Heart left ventricle (tissue), 16 donors: ENCODE measurements at regions of chr1 and their contacts with region 1.

Region 1: GRCh38 chr1:235971571-235972310 is 93.1 kb downstream of the NID1 start:
- DNase-seq: peak; percentile 90 to 94 (median 92)
- ATAC-seq: peak; percentile 89 to 96 (median 95)
- H3K4me3 ChIP-seq: peak overlapping the region in 10 of 12 donors; percentile 25 to 58 (median 48)
- H3K27ac ChIP-seq: peak overlapping the region; percentile 77 to 95 (median 90)
- H3K4me1 ChIP-seq: peaks cover 0 to 23% (median 15%) of the 10 kb centered on the region in 12 donors
- H3K27me3 ChIP-seq: no peaks in the 10 kb centered on the region
- CTCF ChIP-seq: peak; percentile 78 to 94 (median 88)
- POLR2A ChIP-seq: peak in 1 of 2 donors; percentile 38

Region 2: DNA sequence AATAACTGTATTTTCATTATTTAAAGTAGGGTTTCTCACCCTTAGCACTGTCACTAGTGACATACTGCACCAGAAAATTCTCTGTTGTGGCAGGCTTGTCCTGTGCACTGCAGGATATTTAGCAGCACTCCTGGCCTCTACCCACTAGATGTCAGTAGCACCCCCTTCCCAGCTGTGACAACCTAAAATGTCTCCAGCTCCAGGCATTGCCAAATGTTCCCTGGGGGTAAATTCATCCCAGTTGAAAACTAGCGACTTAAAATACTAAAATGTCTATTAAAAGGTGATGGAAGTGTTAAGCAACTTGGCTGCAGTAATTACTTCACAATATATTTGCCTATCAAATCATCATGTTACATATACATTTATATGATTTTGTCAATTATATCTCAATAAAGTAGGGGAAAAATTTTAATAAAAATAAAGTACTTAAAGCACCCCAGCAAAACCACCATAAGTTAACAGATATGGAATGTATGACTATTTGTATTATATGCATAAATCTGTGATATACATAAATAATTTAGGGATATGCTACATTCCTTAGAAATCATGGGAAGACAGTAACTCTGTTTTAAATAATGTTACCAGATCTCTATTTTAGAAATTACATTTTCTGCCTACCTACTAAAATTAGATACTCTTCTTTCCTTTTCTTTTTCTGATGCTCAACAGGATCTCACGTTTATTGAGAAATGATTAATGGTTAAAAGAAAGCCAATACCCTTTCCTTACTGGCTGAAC is 718.4 kb before region 1 on chr1:
- intact Hi-C with region 1: loop called in 1 of 10 experiments (anchors 10 kb)
- DNase-seq: peak in 4 of 5 donors; percentile 45 to 61 (median 50)
- ATAC-seq: peak; percentile 78 to 95 (median 93)
- H3K4me3 ChIP-seq: no peak overlapping the region
- H3K27ac ChIP-seq: no peak overlapping the region
- H3K4me1 ChIP-seq: peaks cover 0 to 13% (median 2%) of the 10 kb centered on the region in 12 donors
- H3K27me3 ChIP-seq: no peaks in the 10 kb centered on the region
- CTCF ChIP-seq: peak; percentile 70 to 93 (median 88)
- POLR2A ChIP-seq: no peak

Region 3: DNA sequence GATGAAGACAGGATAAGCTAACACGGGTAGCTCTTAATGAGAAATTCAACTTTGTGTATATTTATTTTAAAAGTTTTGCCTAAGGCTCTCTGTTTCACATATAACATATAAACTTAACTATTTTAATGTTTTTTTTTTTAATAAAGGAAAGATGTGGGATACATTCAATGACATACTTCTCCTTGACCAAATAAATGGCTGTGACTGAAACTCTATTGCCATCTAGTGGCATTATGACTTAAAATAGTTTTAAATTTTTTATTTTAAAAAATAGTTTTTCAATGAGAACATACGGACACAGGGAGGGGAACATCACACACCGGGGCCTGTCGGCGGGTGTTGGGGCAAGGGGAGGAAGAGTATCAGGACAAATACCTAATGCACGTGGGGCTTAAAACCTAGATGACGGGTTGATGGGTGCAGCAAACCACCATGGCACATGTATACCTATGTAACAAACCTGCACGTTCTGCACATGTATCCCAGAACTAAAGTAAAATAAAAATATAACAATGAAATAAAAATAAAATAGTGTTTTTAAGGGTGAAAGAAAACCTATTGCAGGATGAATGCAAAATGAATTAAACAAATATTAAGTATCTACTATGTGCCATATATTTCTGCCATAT is 188.5 kb before region 1 on chr1:
- intact Hi-C with region 1: loop called in 1 of 10 experiments (anchors 5 kb)
- DNase-seq: no peak
- ATAC-seq: no peak
- H3K4me3 ChIP-seq: no peak overlapping the region
- H3K27ac ChIP-seq: no peak overlapping the region
- H3K4me1 ChIP-seq: peaks cover 0 to 3% (median 0%) of the 10 kb centered on the region in 12 donors
- H3K27me3 ChIP-seq: no peaks in the 10 kb centered on the region
- CTCF ChIP-seq: peak; percentile 27 to 65 (median 54)
- POLR2A ChIP-seq: no peak

Region 4: GRCh38 chr1:235883261-235883927 is 88.3 kb before region 1 on chr1:
- intact Hi-C with region 1: loop called in 1 of 10 experiments (anchors 10 kb)
- DNase-seq: peak; percentile 85 to 91 (median 88)
- ATAC-seq: peak; percentile 67 to 92 (median 86)
- H3K4me3 ChIP-seq: peak overlapping the region in 10 of 12 donors; percentile 7 to 36 (median 22)
- H3K27ac ChIP-seq: peak overlapping the region in 11 of 12 donors; percentile 10 to 68 (median 51)
- H3K4me1 ChIP-seq: peaks cover 0 to 54% (median 12%) of the 10 kb centered on the region in 12 donors
- H3K27me3 ChIP-seq: no peaks in the 10 kb centered on the region
- CTCF ChIP-seq: no peak
- POLR2A ChIP-seq: no peak

Region 5: GRCh38 chr1:235938709-235939479 is 32.8 kb before region 1 on chr1:
- intact Hi-C with region 1: no loop called
- DNase-seq: no peak
- ATAC-seq: peak; percentile 43 to 78 (median 70)
- H3K4me3 ChIP-seq: no peak overlapping the region
- H3K27ac ChIP-seq: peak overlapping the region in 8 of 12 donors; percentile 20 to 81 (median 36)
- H3K4me1 ChIP-seq: peaks cover 0 to 79% (median 4%) of the 10 kb centered on the region in 12 donors
- H3K27me3 ChIP-seq: no peaks in the 10 kb centered on the region
- CTCF ChIP-seq: no peak
- POLR2A ChIP-seq: no peak

Region 6: GRCh38 chr1:236018885-236019453 is 47.2 kb after region 1 on chr1:
- intact Hi-C with region 1: loop called in 1 of 10 experiments (anchors 5 kb)
- DNase-seq: peak; percentile 84 to 92 (median 86)
- ATAC-seq: peak; percentile 74 to 86 (median 82)
- H3K4me3 ChIP-seq: no peak overlapping the region
- H3K27ac ChIP-seq: peak overlapping the region; percentile 54 to 97 (median 84)
- H3K4me1 ChIP-seq: peaks cover 0 to 67% (median 26%) of the 10 kb centered on the region in 12 donors
- H3K27me3 ChIP-seq: no peaks in the 10 kb centered on the region
- CTCF ChIP-seq: no peak
- POLR2A ChIP-seq: no peak